GM10248 (cell line): ENCODE measurements at regions of chr3 and their contacts with region 1.

Region 1: DNA sequence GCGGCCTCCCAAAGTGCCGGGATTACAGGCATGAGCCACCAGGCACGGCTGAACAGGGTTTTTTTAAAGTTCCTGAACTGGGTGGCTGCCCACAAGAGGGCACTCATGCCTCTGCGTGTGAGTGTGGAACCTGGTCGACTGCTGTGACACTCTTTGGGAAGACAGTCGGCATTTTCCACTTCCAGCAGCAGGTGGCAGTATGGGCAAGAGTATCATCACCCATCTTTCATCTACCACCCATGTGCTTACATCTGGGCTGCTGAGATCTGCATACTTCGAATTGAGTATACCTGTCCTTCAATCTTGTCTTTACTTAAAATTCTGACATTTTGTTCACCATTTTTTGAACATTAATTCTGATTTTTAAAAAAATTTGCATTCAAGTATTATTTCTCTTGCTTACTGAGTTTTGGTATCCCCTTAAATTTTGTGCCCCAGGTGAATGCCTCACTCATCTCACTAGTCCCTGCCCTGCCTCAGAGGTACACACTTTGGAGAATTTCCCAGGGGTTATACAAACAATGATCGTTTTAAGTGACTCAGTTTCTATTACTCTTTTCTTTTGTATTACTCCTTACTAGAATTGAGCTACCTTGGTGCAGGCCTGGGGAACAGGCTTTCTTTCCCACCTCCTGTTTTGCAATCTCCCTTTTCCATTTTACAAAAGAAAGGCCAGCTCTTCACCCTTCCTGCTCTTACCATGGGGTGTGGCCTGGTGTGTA is 11.8 kb downstream of the CLEC3B start:
- DNase-seq: peak; percentile 89
- CTCF ChIP-seq: peak; percentile 95

Region 2: GRCh38 chr3:44795197-44795596 is 242.7 kb before region 1 on chr3:
- CTCF ChIA-PET with region 1: no interaction called
- POLR2A ChIA-PET with region 1: no interaction called
- DNase-seq: no peak
- CTCF ChIP-seq: no peak

Region 3: GRCh38 chr3:44825264-44825925 is 212.5 kb before region 1 on chr3:
- CTCF ChIA-PET with region 1: no interaction called
- POLR2A ChIA-PET with region 1: no interaction called
- DNase-seq: peak; percentile 45
- CTCF ChIP-seq: no peak

Region 4: GRCh38 chr3:44981220-44981619 is 56.7 kb before region 1 on chr3:
- CTCF ChIA-PET with region 1: no interaction called
- POLR2A ChIA-PET with region 1: no interaction called
- DNase-seq: no peak
- CTCF ChIP-seq: no peak

Region 5: GRCh38 chr3:45055411-45056143 is 17.7 kb after region 1 on chr3:
- CTCF ChIA-PET with region 1: interaction called, 125 read pairs
- POLR2A ChIA-PET with region 1: no interaction called
- DNase-seq: peak; percentile 34
- CTCF ChIP-seq: peak; percentile 34